Gastrocnemius medialis (tissue), 4 donors: ENCODE measurements at regions of chr1 and their contacts with region 1.

Region 1: GRCh38 chr1:84753516-84754385 is 63.5 kb upstream of the SSX2IP start:
- DNase-seq: peak; percentile 17 to 31
- ATAC-seq: peak; percentile 66 to 69
- H3K4me3 ChIP-seq: no peak overlapping the region
- H3K27ac ChIP-seq: no peak overlapping the region
- H3K4me1 ChIP-seq: no peaks in the 10 kb centered on the region
- H3K27me3 ChIP-seq: peaks cover 0 to 9% (median 3%) of the 10 kb centered on the region in 3 donors
- CTCF ChIP-seq: peak; percentile 62 to 88 (median 75)
- POLR2A ChIP-seq: no peak

Region 2: DNA sequence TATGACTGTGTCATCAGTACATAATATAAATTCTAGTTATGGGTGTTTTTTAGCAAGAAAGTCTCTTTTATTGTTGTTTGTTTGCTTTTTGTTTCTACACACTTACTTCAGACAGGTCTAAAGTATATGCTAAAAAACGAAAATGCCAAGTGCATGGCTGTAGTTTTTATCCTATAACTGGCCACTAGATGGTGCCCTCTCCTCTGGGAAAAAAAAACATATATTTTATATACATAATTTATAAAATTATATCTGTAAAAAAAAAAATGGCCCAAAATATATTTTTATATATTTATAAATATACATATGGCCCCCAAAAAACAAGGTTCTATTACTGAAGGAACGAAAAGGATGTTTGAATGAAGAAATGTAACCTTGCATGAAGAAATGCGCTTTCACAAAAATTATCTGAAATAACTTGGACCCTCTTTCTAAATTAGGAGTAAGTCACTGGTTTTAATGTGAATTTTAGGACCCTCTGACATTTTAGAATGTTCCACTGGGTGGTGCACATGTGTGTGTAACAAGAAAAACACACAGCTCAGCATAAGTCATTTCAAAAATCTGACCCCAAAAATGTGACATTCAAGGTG is 848.3 kb before region 1 on chr1:
- in situ Hi-C with region 1: loop called in 2 of 4 experiments (anchors 25 kb)
- intact Hi-C with region 1: no loop called
- DNase-seq: no peak
- ATAC-seq: no peak
- H3K4me3 ChIP-seq: no peak overlapping the region
- H3K27ac ChIP-seq: no peak overlapping the region
- H3K4me1 ChIP-seq: no peaks in the 10 kb centered on the region
- H3K27me3 ChIP-seq: no peaks in the 10 kb centered on the region
- CTCF ChIP-seq: peak in 3 of 5 experiments; percentile 22 to 72 (median 62)
- POLR2A ChIP-seq: no peak

Region 3: GRCh38 chr1:83931658-83932253 is 822.0 kb before region 1 on chr1:
- in situ Hi-C with region 1: loop called in 2 of 4 experiments (anchors 25 kb)
- intact Hi-C with region 1: no loop called
- DNase-seq: no peak
- ATAC-seq: peak; percentile 61 to 88
- H3K4me3 ChIP-seq: no peak overlapping the region
- H3K27ac ChIP-seq: no peak overlapping the region
- H3K4me1 ChIP-seq: peaks cover 8 to 9% of the 10 kb centered on the region in 2 donors
- H3K27me3 ChIP-seq: no peaks in the 10 kb centered on the region
- CTCF ChIP-seq: peak in 4 of 5 experiments; percentile 58 to 78 (median 68)
- POLR2A ChIP-seq: no peak

Region 4: GRCh38 chr1:84143796-84144565 is 609.8 kb before region 1 on chr1 and contains the start of gene PRKACB:
- in situ Hi-C with region 1: loop called in 3 of 4 experiments (anchors 25 kb)
- intact Hi-C with region 1: no loop called
- DNase-seq: no peak
- ATAC-seq: no peak
- H3K4me3 ChIP-seq: peak within 1 kb of the TSS in 1 of 4 donors; percentile 6
- H3K27ac ChIP-seq: no peak within 1 kb of the TSS
- H3K4me1 ChIP-seq: no peaks in the 10 kb centered on the region
- H3K27me3 ChIP-seq: no peaks in the 10 kb centered on the region
- CTCF ChIP-seq: no peak
- POLR2A ChIP-seq: peak in 1 of 2 donors; percentile 25
- total RNA-seq, gene PRKACB: 4.2 to 12.4 (median 7.0) TPM